Aorta (tissue), 5 donors: ENCODE measurements at regions of chr9 and their contacts with region 1.

Region 1: GRCh38 chr9:126392662-126393371 is 66.2 kb downstream of the MVB12B start:
- DNase-seq: no peak
- ATAC-seq: peak; percentile 82
- H3K4me3 ChIP-seq: no peak overlapping the region
- H3K27ac ChIP-seq: peak overlapping the region; percentile 6 to 45
- H3K4me1 ChIP-seq: no peaks in the 10 kb centered on the region
- H3K27me3 ChIP-seq: no peaks in the 10 kb centered on the region

Region 2: GRCh38 chr9:126069400-126069955 is 323.3 kb before region 1 on chr9:
- intact Hi-C with region 1: no loop called
- DNase-seq: no peak
- ATAC-seq: no peak
- H3K4me3 ChIP-seq: no peak overlapping the region
- H3K27ac ChIP-seq: no peak overlapping the region
- H3K4me1 ChIP-seq: no peaks in the 10 kb centered on the region
- H3K27me3 ChIP-seq: no peaks in the 10 kb centered on the region

Region 3: GRCh38 chr9:126283799-126284465 is 108.9 kb before region 1 on chr9:
- intact Hi-C with region 1: no loop called
- DNase-seq: no peak
- ATAC-seq: no peak
- H3K4me3 ChIP-seq: no peak overlapping the region
- H3K27ac ChIP-seq: no peak overlapping the region
- H3K4me1 ChIP-seq: no peaks in the 10 kb centered on the region
- H3K27me3 ChIP-seq: no peaks in the 10 kb centered on the region

Region 4: GRCh38 chr9:126326228-126327005 is 66.4 kb before region 1 on chr9 and contains the start of gene MVB12B:
- intact Hi-C with region 1: loop called in 1 of 2 experiments (anchors 2 kb)
- DNase-seq: peak; percentile 57 to 84
- ATAC-seq: peak; percentile 45
- H3K4me3 ChIP-seq: peak within 1 kb of the TSS; percentile 61 to 79
- H3K27ac ChIP-seq: peak within 1 kb of the TSS; percentile 37 to 60
- H3K4me1 ChIP-seq: no peaks in the 10 kb centered on the region
- H3K27me3 ChIP-seq: no peaks in the 10 kb centered on the region
- total RNA-seq, gene MVB12B: 14.7 to 25.5 TPM